BJ (cell line): ENCODE measurements at regions of chr20 and their contacts with region 1.

Region 1: GRCh38 chr20:2206957-2207769 is 88.6 kb upstream of the TGM3 start:
- DNase-seq: no peak
- H3K4me3 ChIP-seq: peak overlapping the region; percentile 49
- H3K27me3 ChIP-seq: peaks cover 8% of the 10 kb centered on the region
- CTCF ChIP-seq: peak; percentile 83

Region 2: DNA sequence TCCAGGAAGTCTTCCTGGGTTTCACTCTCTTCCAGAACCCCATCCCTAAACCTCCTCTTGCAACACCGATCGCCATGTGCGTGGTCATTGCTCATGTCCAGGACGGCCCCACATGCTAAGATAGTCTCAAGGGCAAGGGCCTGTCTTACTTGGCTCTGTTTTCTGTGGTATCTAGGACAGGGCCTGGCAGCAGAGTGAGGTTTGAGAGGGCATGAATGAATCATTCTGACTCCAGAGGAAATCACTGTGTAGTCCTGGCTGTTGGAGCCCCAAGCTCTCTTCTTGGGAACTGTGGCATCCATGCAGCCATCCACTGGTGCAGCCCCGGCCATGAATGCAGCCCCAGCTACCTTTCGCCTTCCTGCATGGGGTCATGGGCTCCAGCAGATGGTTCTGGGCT is 299.6 kb before region 1 on chr20:
- CTCF ChIA-PET with region 1: no interaction called
- POLR2A ChIA-PET with region 1: no interaction called
- DNase-seq: no peak
- H3K4me3 ChIP-seq: no peak overlapping the region
- H3K27me3 ChIP-seq: no peaks in the 10 kb centered on the region
- CTCF ChIP-seq: no peak

Region 3: DNA sequence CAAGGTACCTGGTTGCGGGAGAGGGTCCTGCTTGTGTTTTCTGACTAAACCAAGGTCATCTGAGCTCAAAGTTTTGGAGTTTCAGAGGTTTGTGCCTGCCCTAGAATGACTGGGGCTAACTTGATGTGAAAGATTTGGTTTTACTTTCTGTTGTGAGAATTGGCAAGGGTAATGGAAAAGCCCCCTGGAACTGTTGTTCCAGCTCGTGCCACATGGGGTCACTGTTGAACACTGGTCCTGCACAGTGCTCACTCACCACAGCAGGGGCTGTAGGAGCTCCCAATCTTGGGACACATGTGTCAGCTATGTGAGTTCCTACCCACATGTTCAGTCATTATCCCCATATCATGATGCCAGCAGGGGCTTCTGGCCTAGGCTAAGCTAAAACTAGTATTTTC is 180.0 kb after region 1 on chr20:
- CTCF ChIA-PET with region 1: interaction called, 10 read pairs
- POLR2A ChIA-PET with region 1: no interaction called
- DNase-seq: no peak
- H3K4me3 ChIP-seq: no peak overlapping the region
- H3K27me3 ChIP-seq: no peaks in the 10 kb centered on the region
- CTCF ChIP-seq: peak; percentile 36; the same call in 1 of the 2 replicates

Region 4: GRCh38 chr20:2402271-2402980 is 195.3 kb after region 1 on chr20:
- CTCF ChIA-PET with region 1: interaction called, 74 read pairs
- POLR2A ChIA-PET with region 1: no interaction called
- DNase-seq: peak; percentile 0
- H3K4me3 ChIP-seq: no peak overlapping the region
- H3K27me3 ChIP-seq: no peaks in the 10 kb centered on the region
- CTCF ChIP-seq: peak; percentile 58

Region 5: DNA sequence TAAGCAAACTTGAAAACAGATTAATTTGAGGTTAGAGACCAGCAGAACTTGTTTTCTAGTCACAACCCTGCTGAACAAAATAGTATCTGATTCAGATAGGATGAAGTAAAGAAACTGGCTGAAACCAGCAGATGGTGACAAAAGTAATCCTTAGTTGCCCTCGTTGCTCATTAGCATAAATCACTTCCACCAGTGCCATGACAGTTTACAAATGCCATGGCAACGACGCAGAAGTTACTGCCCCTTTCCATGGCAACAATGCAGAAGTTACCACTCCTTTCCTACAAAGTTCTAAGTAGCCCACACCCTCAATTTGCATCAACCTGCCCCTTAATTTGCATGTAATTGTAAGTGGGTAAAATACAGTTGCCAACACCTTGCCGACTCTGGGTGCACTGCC is 239.7 kb after region 1 on chr20:
- CTCF ChIA-PET with region 1: interaction called, 71 read pairs
- POLR2A ChIA-PET with region 1: no interaction called
- DNase-seq: no peak
- H3K4me3 ChIP-seq: no peak overlapping the region
- H3K27me3 ChIP-seq: no peaks in the 10 kb centered on the region
- CTCF ChIP-seq: no peak

Region 6: GRCh38 chr20:2451939-2452732 is 245.0 kb after region 1 on chr20:
- CTCF ChIA-PET with region 1: interaction called, 71 read pairs
- POLR2A ChIA-PET with region 1: no interaction called
- DNase-seq: no peak
- H3K4me3 ChIP-seq: no peak overlapping the region
- H3K27me3 ChIP-seq: no peaks in the 10 kb centered on the region
- CTCF ChIP-seq: peak; percentile 93